ENCODE measurements at regions of chr1 and their contacts with region 1.

Region 1: DNA sequence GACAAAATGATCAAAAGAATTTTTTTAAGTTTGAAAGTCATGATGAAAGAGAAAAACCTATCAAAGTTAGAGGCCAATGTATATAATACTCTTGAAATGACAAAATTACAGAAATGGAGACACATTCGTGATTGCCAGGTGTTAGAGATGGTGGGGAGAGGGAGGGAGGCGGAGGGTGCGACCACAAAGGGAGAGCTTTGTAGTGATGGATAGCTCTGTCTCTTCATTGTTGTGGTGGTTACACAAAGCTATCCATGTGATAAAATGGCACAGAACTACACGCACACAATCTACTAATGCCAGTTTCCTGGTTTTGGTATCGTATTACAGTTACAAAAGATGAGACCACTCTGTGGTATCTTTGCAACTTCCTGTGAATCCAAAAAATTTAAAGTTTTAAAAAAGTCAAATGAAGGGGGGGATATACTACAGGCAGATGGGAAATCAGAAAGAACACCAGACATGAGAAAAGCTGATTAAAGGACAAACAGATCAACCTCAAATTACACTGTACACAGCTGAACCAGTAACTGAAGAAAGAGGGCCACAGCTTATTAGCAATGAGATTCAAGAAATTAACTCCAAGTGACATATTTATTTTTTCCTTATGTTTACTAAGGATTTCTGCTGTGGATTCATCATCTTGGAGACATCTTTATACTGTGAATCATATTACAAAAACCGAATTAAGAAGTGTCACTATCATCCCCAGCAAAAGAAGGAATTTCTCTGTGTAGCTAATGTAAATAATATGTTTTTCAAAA is 199.1 kb downstream of the SLC45A1 start:
- DNase-seq: no peak
- H3K4me3 ChIP-seq: no peak overlapping the region
- H3K4me3 Mint-ChIP-seq: no peak overlapping the region
- H3K27ac Mint-ChIP-seq: no peak overlapping the region
- H3K4me1 ChIP-seq: peaks cover 34% of the 10 kb centered on the region
- H3K4me1 Mint-ChIP-seq: peaks cover 23% of the 10 kb centered on the region
- H3K27me3 ChIP-seq: no peaks in the 10 kb centered on the region
- H3K27me3 Mint-ChIP-seq: no peaks in the 10 kb centered on the region
- CTCF ChIP-seq: no peak

Region 2: DNA sequence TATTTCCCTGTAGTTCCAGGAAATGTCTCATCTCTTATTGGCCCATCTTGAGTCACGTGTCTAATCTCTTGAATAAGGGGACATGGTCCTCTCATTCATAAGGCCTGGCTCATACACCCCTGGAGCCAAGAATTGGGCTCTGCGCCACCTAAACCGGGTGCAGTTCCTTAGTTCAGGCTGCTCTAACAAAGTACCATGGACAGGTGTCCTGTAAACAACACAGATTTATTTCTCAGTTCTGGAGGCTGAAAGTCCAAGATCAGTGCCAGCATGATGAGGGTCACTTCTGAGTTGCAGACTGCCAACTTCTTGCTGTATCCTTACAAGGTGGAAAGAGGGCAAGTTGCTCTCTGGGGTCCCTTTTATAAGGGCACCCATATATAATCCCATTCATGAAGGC is 806.1 kb before region 1 on chr1:
- CTCF ChIA-PET with region 1: interaction called, 11 read pairs
- POLR2A ChIA-PET with region 1: no interaction called
- intact Hi-C with region 1: no loop called
- DNase-seq: no peak
- H3K4me3 ChIP-seq: no peak overlapping the region
- H3K4me3 Mint-ChIP-seq: no peak overlapping the region
- H3K27ac Mint-ChIP-seq: no peak overlapping the region
- H3K4me1 ChIP-seq: no peaks in the 10 kb centered on the region
- H3K4me1 Mint-ChIP-seq: peaks cover 5% of the 10 kb centered on the region
- H3K27me3 ChIP-seq: no peaks in the 10 kb centered on the region
- H3K27me3 Mint-ChIP-seq: no peaks in the 10 kb centered on the region
- CTCF ChIP-seq: no peak

Region 3: DNA sequence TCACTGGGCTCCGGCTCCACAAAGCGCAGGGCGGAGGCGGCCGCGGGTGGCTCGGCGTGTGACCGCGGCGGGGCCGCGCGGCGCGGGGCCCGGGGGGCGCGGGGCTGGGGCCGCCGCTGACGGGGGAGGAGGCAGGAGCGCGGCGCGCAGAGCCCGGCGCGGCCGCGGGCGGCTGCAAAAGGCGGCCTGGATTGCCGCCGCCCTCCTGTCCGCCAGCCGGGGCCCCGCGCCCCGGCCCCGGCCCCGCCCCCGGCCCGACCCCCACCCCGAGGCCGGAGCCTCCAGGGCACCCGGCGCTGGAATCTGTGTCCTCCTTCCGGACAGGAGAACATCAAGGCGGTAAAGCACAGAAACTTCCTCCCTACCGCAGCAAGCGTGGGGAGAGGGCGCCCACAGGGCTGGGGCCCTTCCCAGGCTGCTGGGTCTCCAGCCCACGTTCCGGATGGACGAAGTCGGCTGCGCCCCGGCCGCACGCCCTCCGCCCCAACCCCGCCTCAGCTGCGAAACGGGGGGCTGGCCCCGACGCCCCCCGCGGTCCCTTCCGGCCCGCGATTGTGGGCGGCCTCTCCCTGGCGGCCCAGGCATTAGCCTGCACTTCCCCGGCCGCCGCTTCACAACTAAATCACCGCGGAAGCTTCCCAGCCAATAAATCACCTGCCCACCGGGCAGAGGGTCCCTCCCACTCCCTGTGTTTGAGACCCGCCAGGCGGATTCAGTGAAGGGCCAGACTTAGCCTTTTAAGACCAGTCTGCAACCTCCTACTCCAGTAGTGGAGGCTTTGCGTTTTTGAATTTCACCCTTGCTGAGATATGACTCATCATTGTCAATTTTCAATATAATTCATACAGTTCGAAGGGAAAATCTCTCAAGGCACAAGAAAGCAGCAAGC is 93.1 kb before region 1 on chr1:
- CTCF ChIA-PET with region 1: no interaction called
- POLR2A ChIA-PET with region 1: no interaction called
- intact Hi-C with region 1: no loop called
- DNase-seq: peak; percentile 75 to 79
- H3K4me3 ChIP-seq: peak overlapping the region; percentile 80
- H3K4me3 Mint-ChIP-seq: no peak overlapping the region
- H3K27ac Mint-ChIP-seq: peak overlapping the region; percentile 74
- H3K4me1 ChIP-seq: peaks cover 50% of the 10 kb centered on the region
- H3K4me1 Mint-ChIP-seq: peaks cover 30% of the 10 kb centered on the region
- H3K27me3 ChIP-seq: no peaks in the 10 kb centered on the region
- H3K27me3 Mint-ChIP-seq: no peaks in the 10 kb centered on the region
- CTCF ChIP-seq: peak in 1 of 2 experiments; percentile 4

Region 4: DNA sequence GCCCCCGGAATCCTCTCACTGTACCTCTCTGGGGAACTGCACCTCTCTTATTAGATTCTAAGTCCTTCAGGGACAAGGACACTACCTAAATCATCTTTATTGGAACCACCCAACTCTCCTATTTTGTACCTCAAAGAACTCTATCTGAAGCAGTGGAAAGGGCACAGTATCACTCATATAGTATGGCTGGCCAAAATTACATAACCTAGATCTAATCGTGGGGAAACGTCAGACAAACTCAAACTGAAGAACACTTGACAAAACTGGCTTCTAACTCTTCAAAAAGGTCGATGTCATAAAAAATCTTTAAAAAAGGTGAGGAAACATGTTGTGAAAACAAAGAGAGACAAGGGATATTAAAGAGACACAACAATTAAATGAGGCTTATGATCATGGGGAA is 11.0 kb after region 1 on chr1:
- CTCF ChIA-PET with region 1: no interaction called
- POLR2A ChIA-PET with region 1: no interaction called
- intact Hi-C with region 1: no loop called
- DNase-seq: no peak
- H3K4me3 ChIP-seq: no peak overlapping the region
- H3K4me3 Mint-ChIP-seq: no peak overlapping the region
- H3K27ac Mint-ChIP-seq: no peak overlapping the region
- H3K4me1 ChIP-seq: peaks cover 5% of the 10 kb centered on the region; the same call in 1 of the 2 replicates
- H3K4me1 Mint-ChIP-seq: peaks cover 7% of the 10 kb centered on the region
- H3K27me3 ChIP-seq: no peaks in the 10 kb centered on the region
- H3K27me3 Mint-ChIP-seq: no peaks in the 10 kb centered on the region
- CTCF ChIP-seq: no peak

Measured in Caco-2 (cell line).